Heart right ventricle (tissue), 16 donors: ENCODE measurements at regions of chr3 and their contacts with region 1.

Region 1: DNA sequence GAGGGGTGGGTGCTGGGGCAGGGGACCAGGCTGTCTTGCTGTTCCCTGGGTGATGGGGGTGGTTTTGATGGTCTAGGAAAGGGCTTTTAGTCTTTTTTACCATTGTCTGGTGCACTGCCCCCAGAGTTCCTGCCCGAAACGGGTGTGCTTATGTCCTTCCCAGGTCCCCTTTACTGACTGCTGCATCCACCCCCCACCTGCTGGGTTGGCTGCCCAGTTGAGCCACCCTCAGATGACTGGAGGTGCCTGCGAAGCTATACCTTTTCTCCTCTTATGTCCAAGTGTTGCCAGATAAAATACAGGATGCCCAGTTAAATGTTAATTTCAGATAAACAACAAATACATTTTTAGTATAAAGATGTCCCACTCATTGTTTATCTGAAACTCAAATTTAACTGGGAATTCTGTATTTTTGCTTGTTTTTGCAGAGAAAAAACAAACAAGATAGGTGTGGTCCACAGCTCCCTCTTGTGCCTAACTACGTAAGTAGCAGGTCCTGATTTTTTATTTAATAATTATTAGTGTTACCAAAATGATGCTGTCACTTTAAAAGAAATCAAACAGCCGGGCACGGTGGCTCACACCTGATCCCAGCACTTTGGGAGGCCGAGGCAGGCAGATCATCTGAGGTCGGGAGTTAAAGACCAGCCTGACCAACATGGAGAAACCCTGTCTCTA is 6.1 kb upstream of the RPP14 start:
- DNase-seq: no peak
- ATAC-seq: no peak
- H3K4me3 ChIP-seq: no peak overlapping the region
- H3K27ac ChIP-seq: no peak overlapping the region
- H3K4me1 ChIP-seq: peaks cover 0 to 11% (median 0%) of the 10 kb centered on the region in 9 donors
- H3K27me3 ChIP-seq: peaks cover 0 to 9% (median 0%) of the 10 kb centered on the region in 7 donors
- CTCF ChIP-seq: peak; percentile 29 to 76 (median 59)

Region 2: DNA sequence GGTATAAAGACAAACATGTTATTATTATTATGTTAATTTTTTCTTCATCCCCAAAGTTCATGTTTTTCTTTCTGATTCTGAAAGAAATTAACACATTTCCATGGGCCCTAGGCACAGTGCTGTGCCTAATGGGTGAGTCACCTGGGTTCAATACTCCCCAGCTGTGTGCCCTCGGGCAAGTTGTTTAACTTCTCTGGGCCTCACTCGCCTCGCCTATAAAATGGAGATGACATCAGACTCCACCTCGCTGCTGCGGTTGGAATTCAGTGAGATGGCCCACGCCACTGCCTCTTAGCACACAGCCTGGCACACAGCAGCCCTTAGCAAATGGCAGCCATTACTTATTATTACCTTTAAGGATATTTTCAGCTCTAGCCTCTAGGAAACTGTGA is 111.8 kb before region 1 on chr3:
- intact Hi-C with region 1: loop called (anchors 1 to 5 kb)
- DNase-seq: no peak
- ATAC-seq: no peak
- H3K4me3 ChIP-seq: no peak overlapping the region
- H3K27ac ChIP-seq: peak overlapping the region in 5 of 10 donors; percentile 33 to 59 (median 50)
- H3K4me1 ChIP-seq: peaks cover 0 to 26% (median 18%) of the 10 kb centered on the region in 9 donors
- H3K27me3 ChIP-seq: no peaks in the 10 kb centered on the region
- CTCF ChIP-seq: no peak

Region 3: DNA sequence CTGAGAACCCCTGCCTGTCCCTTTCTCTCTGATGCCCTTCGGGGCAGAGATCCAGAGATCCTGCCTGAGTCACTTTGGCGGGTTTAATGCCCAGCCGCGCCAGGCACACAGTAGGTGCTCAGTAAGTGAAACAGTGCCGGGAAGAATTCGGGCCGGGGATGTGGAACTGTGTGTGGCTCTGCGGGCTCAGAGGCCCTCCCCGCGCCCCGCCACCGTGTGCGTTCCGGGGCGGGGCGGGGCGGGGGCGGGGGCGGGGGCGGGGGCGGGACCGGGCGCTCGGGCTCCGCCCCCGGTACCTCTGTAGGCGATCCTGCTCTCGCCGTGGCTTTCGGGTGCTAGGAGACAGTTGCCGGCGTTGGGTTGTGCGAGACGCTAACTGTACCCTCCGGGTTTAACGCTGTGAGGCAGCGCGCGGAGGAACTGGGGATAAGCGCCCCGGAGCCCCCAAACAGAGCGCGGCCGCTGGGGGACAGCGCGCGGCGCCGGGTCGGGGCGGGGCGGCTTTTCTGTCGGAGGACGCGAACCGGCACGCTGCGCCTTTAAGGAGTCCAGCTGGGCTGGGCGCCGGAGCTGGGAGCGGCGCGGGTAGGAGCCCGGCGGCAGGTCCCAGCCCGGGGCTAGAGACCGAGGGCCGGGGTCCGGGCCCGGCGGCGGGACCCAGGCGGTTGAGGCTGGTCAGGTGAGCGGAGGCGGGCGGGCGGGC is 62.6 kb before region 1 on chr3 and contains the start of gene ABHD6:
- intact Hi-C with region 1: loop called in 8 of 10 experiments (anchors 5 to 10 kb)
- DNase-seq: peak; percentile 74 to 82
- ATAC-seq: peak; percentile 93 to 96 (median 94)
- H3K4me3 ChIP-seq: peak within 1 kb of the TSS; percentile 88 to 95 (median 91)
- H3K27ac ChIP-seq: peak within 1 kb of the TSS in 9 of 10 donors; percentile 74 to 90 (median 78)
- H3K4me1 ChIP-seq: peaks cover 0 to 35% (median 17%) of the 10 kb centered on the region in 9 donors
- H3K27me3 ChIP-seq: no peaks in the 10 kb centered on the region
- CTCF ChIP-seq: peak in 7 of 9 donors; percentile 5 to 61 (median 48)
- total RNA-seq, gene ABHD6: 3.1 to 11.6 (median 6.3) TPM

Region 4: DNA sequence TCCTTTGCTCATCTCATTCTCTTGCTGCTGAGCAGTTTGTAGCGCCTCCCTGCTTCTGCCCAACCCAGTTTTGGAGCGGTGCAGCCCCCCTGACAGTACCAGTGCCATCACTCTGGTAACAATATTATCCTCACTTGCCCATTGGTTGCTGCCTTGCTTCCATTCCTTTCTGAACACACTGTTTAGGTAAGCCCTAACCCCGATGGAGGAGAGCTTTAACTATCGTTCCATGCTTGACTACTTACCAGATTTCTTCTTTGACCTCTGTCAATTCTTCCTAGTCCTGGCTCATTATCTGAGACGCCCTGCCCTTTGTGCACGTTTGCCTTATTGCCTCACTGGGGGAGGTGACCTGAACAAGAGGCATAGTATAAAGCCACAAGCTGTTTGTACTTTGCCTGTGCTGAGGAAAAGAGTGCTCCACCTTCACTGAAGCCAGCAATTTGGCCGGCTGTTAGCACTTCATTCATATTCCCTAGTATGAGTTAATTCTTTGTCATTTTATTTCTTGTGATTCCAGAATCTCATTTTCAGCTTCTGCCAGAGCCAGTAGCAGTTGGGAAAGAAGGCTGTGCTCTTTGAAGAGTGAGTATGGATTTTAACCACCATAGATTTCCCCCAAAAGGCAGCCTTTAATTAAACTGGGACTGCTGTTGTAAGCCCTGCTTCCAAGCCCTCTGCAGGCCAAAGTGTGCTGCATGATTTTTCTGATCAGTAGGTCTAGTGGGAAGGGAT is 50.5 kb before region 1 on chr3:
- intact Hi-C with region 1: loop called in 1 of 10 experiments (anchors 10 kb)
- DNase-seq: no peak
- ATAC-seq: peak in 2 of 8 donors; percentile 21 to 51
- H3K4me3 ChIP-seq: no peak overlapping the region
- H3K27ac ChIP-seq: no peak overlapping the region
- H3K4me1 ChIP-seq: peaks cover 0 to 29% (median 8%) of the 10 kb centered on the region in 9 donors
- H3K27me3 ChIP-seq: no peaks in the 10 kb centered on the region
- CTCF ChIP-seq: peak in 6 of 9 donors; percentile 12 to 26 (median 14)

Region 5: DNA sequence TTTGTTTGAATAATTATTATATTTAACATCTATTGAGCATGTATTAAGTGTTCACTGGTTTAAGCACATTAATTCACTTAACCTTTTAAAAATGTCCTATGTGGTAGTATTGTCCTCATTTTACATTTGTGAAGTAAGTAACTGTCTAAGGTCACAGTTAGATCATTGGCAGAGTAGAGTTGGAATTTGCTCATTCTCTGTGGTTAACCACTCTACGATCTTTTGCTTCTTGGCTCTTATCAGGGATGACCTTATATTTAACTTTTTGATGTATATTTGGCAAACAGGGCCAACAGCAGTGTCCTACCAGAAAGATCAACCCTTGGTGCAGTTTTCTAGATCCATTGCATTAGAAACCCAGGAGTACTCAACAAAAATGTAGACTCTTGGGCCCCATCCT is 66.7 kb after region 1 on chr3:
- intact Hi-C with region 1: no loop called
- DNase-seq: no peak
- ATAC-seq: no peak
- H3K4me3 ChIP-seq: no peak overlapping the region
- H3K27ac ChIP-seq: no peak overlapping the region
- H3K4me1 ChIP-seq: peaks cover 0 to 12% (median 0%) of the 10 kb centered on the region in 9 donors
- H3K27me3 ChIP-seq: no peaks in the 10 kb centered on the region
- CTCF ChIP-seq: no peak

Region 6: DNA sequence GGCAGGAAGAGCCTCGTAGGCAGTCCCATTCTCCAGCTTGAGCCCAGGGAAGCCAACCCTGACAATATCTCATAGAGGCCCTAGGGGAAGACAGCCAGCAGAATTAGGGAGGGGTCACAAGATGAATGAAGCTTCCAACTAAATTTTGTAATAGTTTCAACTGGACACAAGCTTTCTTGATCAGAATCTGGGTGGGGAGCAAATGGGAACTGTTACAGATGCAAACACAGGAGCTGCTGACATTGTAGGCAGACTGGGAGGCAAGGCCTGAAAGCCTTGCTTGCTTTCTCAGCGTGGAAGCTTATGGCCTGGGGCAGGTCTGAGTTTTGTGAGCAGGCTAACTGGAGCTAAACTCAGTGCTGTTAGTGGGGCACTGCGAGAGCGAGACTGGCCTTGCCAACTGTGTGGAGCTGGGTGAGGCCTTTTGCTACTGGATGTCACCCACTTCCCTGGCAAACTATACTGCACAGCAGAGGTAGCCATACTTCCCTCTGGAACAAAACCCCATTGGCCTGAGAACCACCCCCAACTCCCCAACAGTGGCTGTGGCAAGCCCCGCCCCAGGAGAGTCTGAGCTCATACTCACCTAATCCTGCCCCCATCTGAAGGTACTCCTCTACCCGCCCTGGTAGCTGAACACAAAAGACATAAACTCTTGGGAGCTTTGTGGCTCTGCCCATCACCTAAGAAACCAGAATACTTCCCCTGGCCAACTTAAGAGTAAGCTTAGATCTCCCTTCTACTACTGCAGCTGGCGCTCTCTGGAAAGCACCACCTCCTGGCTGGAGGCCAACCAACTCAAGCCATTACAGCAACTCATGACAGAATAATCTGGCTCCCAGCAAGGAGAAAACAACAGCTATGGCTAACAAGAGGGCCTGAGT is 706.9 kb after region 1 on chr3:
- intact Hi-C with region 1: no loop called
- DNase-seq: peak; percentile 8 to 41
- ATAC-seq: peak in 2 of 8 donors; percentile 25 to 39
- H3K4me3 ChIP-seq: no peak overlapping the region
- H3K27ac ChIP-seq: no peak overlapping the region
- H3K4me1 ChIP-seq: no peaks in the 10 kb centered on the region
- H3K27me3 ChIP-seq: no peaks in the 10 kb centered on the region
- CTCF ChIP-seq: no peak